ENCODE measurements at regions of chr2 and their contacts with region 1.

Region 1: GRCh38 chr2:10097352-10098148 is 17.3 kb upstream of the CYS1 start:
- DNase-seq: peak; percentile 44
- ATAC-seq: peak; percentile 91
- H3K4me3 Mint-ChIP-seq: no peak overlapping the region
- H3K27ac Mint-ChIP-seq: no peak overlapping the region
- H3K4me1 Mint-ChIP-seq: peaks cover 4% of the 10 kb centered on the region
- H3K27me3 Mint-ChIP-seq: peaks cover 40% of the 10 kb centered on the region

Region 2: DNA sequence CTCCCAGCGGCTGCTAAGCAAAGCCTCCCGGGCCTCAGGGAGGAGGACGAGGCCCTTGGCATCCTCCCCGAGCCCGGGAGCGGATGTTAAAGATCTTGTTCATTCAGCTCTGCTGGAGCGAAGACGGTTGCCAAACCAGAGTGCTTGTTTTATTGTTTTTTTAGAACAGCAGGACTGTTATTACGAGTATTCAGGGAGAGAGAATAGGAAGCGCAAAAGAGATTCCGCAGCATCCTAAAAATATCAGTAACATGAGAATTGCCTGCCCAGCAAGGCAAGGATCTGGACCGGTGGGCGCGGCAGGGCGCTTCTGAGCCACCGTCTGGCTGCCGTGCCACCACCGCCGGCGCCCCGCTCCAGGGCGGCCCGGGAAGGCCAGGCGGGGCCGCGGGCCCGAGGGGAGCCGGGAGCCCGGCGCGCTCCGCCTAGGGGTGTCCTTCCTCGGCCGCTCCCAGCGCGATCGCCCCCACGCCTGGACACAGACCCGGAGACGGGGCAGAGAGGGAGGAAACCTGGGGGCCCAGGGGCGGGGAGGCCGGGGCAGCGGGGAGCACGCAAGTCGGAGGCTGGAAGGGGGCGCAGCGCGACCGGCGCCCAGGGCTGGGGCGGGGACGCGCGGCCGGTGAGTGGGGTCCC is 18.2 kb before region 1 on chr2:
- CTCF ChIA-PET with region 1: interaction called, 109 read pairs
- POLR2A ChIA-PET with region 1: no interaction called
- DNase-seq: peak; percentile 37
- ATAC-seq: peak; percentile 56
- H3K4me3 Mint-ChIP-seq: peak overlapping the region; percentile 73
- H3K27ac Mint-ChIP-seq: no peak overlapping the region
- H3K4me1 Mint-ChIP-seq: peaks cover 27% of the 10 kb centered on the region
- H3K27me3 Mint-ChIP-seq: peaks cover 63% of the 10 kb centered on the region

Region 3: GRCh38 chr2:10109311-10109710 is 11.8 kb after region 1 on chr2:
- CTCF ChIA-PET with region 1: interaction called, 13 read pairs
- POLR2A ChIA-PET with region 1: no interaction called
- DNase-seq: no peak
- ATAC-seq: no peak
- H3K4me3 Mint-ChIP-seq: no peak overlapping the region
- H3K27ac Mint-ChIP-seq: no peak overlapping the region
- H3K4me1 Mint-ChIP-seq: no peaks in the 10 kb centered on the region
- H3K27me3 Mint-ChIP-seq: peaks cover 3% of the 10 kb centered on the region

Region 4: GRCh38 chr2:10267551-10268465 is 170.3 kb after region 1 on chr2:
- CTCF ChIA-PET with region 1: no interaction called
- POLR2A ChIA-PET with region 1: no interaction called
- DNase-seq: no peak
- ATAC-seq: no peak
- H3K4me3 Mint-ChIP-seq: no peak overlapping the region
- H3K27ac Mint-ChIP-seq: no peak overlapping the region
- H3K4me1 Mint-ChIP-seq: peaks cover 6% of the 10 kb centered on the region
- H3K27me3 Mint-ChIP-seq: peaks cover 6% of the 10 kb centered on the region

Measured in activated CD8-positive, alpha-beta T cell treated with anti-CD3 and anti-CD28 coated beads, Interleukin-2, amount 10 ng/mL, durations not matched to agents 7 days and 5 days (primary cell).